ENCODE measurements at regions of chr16 and their contacts with region 1.

Region 1: GRCh38 chr16:29700253-29700987 is 21.4 kb downstream of the QPRT start:
- DNase-seq: peak; percentile 59
- H3K4me3 Mint-ChIP-seq: peak overlapping the region; percentile 43
- H3K27ac Mint-ChIP-seq: peak overlapping the region; percentile 90
- H3K4me1 Mint-ChIP-seq: peaks cover 30% of the 10 kb centered on the region
- H3K27me3 Mint-ChIP-seq: no peaks in the 10 kb centered on the region

Region 2: DNA sequence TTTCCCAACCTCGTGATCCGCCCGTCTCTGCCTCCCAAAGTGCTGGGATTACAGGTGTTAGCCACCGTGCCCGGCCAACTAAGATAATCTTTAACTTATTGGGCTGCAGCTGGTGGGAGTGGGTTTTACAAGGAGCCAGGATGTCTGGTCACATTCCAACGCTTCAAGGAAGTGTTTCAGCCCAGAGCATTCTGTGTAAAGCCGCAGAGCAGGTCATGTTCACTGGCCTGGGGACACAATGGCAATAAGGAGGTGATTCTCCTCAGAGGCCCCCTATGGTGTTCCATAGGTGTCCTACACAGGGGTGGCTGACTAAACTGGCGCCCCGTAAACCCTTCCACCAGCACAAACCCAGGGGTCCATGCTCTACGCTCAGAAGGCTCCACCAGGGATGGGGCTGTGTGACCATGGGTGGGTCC is 20.2 kb before region 1 on chr16:
- intact Hi-C with region 1: no loop called
- DNase-seq: no peak
- H3K4me3 Mint-ChIP-seq: peak overlapping the region; percentile 68
- H3K27ac Mint-ChIP-seq: peak overlapping the region; percentile 88
- H3K4me1 Mint-ChIP-seq: peaks cover 18% of the 10 kb centered on the region
- H3K27me3 Mint-ChIP-seq: no peaks in the 10 kb centered on the region

Region 3: DNA sequence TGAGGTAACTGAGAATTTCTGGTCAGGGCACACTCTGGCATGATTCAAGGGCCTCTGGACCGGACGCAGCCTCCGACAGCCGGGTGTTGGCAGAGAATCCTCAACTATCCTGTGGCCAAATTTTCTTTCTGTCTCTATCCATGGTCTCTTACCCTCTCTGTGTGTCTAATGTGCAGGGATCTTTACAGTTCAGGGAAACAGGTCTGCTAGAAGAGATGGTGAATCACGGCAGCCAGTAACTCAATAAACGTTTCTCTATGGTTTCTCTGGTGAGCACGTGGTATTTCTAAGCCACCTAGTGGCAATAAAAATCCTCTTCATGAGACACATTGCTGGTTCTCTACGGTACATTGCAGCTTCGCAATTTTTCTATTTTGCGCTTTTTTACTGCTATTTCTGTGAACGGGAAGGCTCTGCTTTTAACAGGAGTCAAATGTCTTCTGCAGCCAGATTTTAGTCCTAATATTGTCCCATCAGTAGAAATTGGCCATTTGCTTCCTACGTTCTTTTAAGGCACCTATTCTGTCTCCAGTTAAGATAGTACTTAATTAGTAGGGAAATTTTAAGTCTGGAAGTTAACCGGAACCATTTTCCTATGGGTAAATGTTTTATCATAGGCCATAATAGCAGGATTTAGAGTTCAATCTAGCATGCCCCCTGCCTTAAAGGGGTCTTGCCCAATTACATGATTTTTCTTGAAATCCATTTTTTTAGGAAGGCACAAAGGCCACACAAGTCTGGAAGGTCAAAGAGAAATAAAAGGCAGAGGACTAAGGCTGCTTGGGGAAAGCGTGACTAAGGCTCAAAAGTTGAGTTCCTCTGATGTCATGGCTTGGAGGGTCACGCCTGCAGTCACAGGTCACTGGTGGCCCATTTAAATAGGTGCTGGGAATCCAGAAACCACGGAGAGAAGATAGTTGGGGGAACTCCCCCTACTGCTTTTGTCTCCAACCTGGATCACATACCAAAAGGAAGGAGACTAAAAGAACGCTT is 10.1 kb after region 1 on chr16:
- intact Hi-C with region 1: loop called (anchors 1 kb)
- DNase-seq: peak; percentile 37
- H3K4me3 Mint-ChIP-seq: no peak overlapping the region
- H3K27ac Mint-ChIP-seq: no peak overlapping the region
- H3K4me1 Mint-ChIP-seq: peaks cover 16% of the 10 kb centered on the region
- H3K27me3 Mint-ChIP-seq: peaks cover 6% of the 10 kb centered on the region

Region 4: DNA sequence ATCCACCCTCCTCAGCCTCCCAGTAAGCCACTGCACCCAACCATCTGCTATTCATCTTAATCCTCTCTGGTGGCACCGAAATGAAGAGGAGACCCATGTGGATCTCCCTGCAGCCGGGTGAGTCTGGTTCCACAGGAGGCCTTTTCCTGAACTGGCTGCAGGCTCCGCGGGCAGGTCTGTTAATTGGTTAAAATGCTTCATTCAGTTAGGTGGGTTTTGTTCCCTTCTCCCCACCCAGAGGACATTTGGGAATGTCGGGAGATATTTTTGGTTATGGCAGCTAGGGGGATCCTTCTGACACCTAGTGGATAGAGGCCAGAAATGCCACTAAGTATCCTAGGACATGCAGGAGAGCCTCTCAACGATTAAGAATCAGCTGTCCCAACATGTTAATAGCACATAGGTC is 28.7 kb after region 1 on chr16:
- intact Hi-C with region 1: loop called (anchors 1 kb)
- DNase-seq: no peak
- H3K4me3 Mint-ChIP-seq: no peak overlapping the region
- H3K27ac Mint-ChIP-seq: no peak overlapping the region
- H3K4me1 Mint-ChIP-seq: peaks cover 20% of the 10 kb centered on the region
- H3K27me3 Mint-ChIP-seq: peaks cover 9% of the 10 kb centered on the region

Region 5: DNA sequence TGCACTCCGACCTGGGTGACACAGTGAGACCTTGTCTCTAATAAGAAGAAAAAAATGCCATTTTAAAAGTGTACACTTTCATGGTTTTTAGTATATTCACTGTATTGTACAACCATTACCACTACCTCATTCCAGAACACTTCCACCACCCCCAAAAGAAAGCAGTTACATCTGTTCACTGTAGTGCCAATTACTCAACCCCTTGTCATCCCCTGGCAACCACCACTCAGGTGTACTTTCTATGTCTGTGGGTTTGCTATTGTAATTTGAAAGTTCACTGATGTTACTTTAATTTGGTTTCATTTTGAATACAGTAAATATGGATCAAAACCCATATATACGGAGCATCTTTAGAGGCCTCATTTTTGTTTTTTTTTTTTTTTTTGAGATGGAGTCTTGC is 83.7 kb after region 1 on chr16:
- intact Hi-C with region 1: no loop called
- DNase-seq: no peak
- H3K4me3 Mint-ChIP-seq: no peak overlapping the region
- H3K27ac Mint-ChIP-seq: peak overlapping the region; percentile 16
- H3K4me1 Mint-ChIP-seq: peaks cover 21% of the 10 kb centered on the region
- H3K27me3 Mint-ChIP-seq: peaks cover 5% of the 10 kb centered on the region

Region 6: DNA sequence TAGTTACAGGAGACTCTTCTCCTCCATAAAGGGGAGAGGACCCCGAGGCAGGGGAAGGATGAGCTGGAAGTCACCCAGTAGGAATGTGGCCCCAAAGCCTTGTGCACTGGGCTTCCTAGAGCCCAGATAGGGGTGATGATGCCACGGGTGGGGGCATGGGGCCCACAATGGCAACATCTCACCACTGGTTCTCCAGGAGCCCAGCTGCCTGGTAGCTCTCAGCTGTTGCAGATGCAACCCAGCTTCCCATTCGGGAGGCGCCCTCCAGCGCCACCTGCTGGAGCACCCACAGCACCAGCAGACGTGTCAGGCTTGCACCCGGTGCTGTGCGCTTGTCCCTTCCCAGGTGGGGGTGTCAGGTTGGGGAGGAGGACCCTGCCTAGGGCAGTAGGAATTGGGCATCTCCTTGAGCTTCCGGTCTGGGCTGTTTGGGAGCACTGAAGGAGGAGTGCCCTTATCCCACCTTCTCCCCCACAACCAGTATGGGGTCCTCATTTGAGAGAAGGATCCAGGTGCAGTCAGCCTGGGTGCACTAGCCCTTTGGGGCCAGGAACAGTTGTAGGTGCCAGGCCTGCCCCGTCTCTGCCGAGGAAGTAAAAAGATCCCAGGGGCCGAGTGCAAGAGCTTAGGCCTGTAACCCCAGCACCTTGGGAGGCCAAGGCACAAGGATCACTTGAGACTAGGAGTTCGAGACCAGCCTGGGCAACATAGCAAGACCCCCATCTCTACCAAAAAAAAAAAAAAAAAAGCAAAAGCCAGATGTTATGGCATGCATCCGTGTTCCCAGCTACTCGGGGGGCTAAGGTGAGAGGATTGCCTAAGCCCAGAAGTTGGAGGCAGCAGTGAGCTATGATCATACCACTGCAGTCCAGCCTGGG is 148.2 kb after region 1 on chr16:
- intact Hi-C with region 1: loop called (anchors 1 kb)
- DNase-seq: peak; percentile 67
- H3K4me3 Mint-ChIP-seq: no peak overlapping the region
- H3K27ac Mint-ChIP-seq: no peak overlapping the region
- H3K4me1 Mint-ChIP-seq: peaks cover 5% of the 10 kb centered on the region
- H3K27me3 Mint-ChIP-seq: no peaks in the 10 kb centered on the region

Region 7: GRCh38 chr16:30018731-30019158 is 318.3 kb after region 1 on chr16:
- intact Hi-C with region 1: loop called (anchors 1 kb)
- DNase-seq: no peak
- H3K4me3 Mint-ChIP-seq: no peak overlapping the region
- H3K27ac Mint-ChIP-seq: peak overlapping the region; percentile 1
- H3K4me1 Mint-ChIP-seq: peaks cover 17% of the 10 kb centered on the region
- H3K27me3 Mint-ChIP-seq: peaks cover 12% of the 10 kb centered on the region

Region 8: GRCh38 chr16:30152517-30152916 is 452.1 kb after region 1 on chr16:
- intact Hi-C with region 1: no loop called
- DNase-seq: no peak
- H3K4me3 Mint-ChIP-seq: no peak overlapping the region
- H3K27ac Mint-ChIP-seq: no peak overlapping the region
- H3K4me1 Mint-ChIP-seq: no peaks in the 10 kb centered on the region
- H3K27me3 Mint-ChIP-seq: no peaks in the 10 kb centered on the region